Activated CD8-positive, alpha-beta T cell treated with anti-CD3 and anti-CD28 coated beads for 36 hours (primary cell): ENCODE measurements at regions of chr20 and their contacts with region 1.

Region 1: GRCh38 chr20:45934586-45935415 is at the start of gene PCIF1:
- DNase-seq: peak; percentile 99
- ATAC-seq: peak; percentile 84
- H3K4me3 Mint-ChIP-seq: peak within 1 kb of the TSS; percentile 95
- H3K27ac Mint-ChIP-seq: peak within 1 kb of the TSS; percentile 96
- H3K4me1 Mint-ChIP-seq: peaks cover 25% of the 10 kb centered on the region
- H3K27me3 Mint-ChIP-seq: no peaks in the 10 kb centered on the region
- CTCF ChIP-seq: no peak
- total RNA-seq, gene PCIF1: 27.8 to 29.5 TPM

Region 2: GRCh38 chr20:45812157-45813020 is 122.4 kb before region 1 on chr20 and contains the start of gene UBE2C:
- CTCF ChIA-PET with region 1: no interaction called
- POLR2A ChIA-PET with region 1: interaction called, 11 read pairs
- intact Hi-C with region 1: no loop called
- DNase-seq: peak; percentile 98
- ATAC-seq: peak; percentile 100
- H3K4me3 Mint-ChIP-seq: peak within 1 kb of the TSS; percentile 98
- H3K27ac Mint-ChIP-seq: peak within 1 kb of the TSS; percentile 83
- H3K4me1 Mint-ChIP-seq: peaks cover 16% of the 10 kb centered on the region
- H3K27me3 Mint-ChIP-seq: no peaks in the 10 kb centered on the region
- CTCF ChIP-seq: no peak
- total RNA-seq, gene UBE2C: 149 to 151 TPM

Region 3: GRCh38 chr20:45880988-45881788 is 53.6 kb before region 1 on chr20 and contains the start of gene ZSWIM1:
- CTCF ChIA-PET with region 1: interaction called, 5 read pairs
- POLR2A ChIA-PET with region 1: interaction called, 14 read pairs
- intact Hi-C with region 1: loop called (anchors 2 kb)
- DNase-seq: peak; percentile 100
- ATAC-seq: peak; percentile 99
- H3K4me3 Mint-ChIP-seq: peak within 1 kb of the TSS; percentile 94
- H3K27ac Mint-ChIP-seq: peak within 1 kb of the TSS; percentile 93
- H3K4me1 Mint-ChIP-seq: peaks cover 43% of the 10 kb centered on the region
- H3K27me3 Mint-ChIP-seq: no peaks in the 10 kb centered on the region
- CTCF ChIP-seq: no peak
- total RNA-seq, gene ZSWIM1: 8.2 to 9.1 TPM

Region 4: GRCh38 chr20:45899041-45899835 is 35.6 kb before region 1 on chr20:
- CTCF ChIA-PET with region 1: no interaction called
- POLR2A ChIA-PET with region 1: interaction called, 59 read pairs
- intact Hi-C with region 1: no loop called
- DNase-seq: no peak
- ATAC-seq: no peak
- H3K4me3 Mint-ChIP-seq: no peak overlapping the region
- H3K27ac Mint-ChIP-seq: no peak overlapping the region
- H3K4me1 Mint-ChIP-seq: peaks cover under 1% of the 10 kb centered on the region
- H3K27me3 Mint-ChIP-seq: no peaks in the 10 kb centered on the region
- CTCF ChIP-seq: no peak

Region 5: DNA sequence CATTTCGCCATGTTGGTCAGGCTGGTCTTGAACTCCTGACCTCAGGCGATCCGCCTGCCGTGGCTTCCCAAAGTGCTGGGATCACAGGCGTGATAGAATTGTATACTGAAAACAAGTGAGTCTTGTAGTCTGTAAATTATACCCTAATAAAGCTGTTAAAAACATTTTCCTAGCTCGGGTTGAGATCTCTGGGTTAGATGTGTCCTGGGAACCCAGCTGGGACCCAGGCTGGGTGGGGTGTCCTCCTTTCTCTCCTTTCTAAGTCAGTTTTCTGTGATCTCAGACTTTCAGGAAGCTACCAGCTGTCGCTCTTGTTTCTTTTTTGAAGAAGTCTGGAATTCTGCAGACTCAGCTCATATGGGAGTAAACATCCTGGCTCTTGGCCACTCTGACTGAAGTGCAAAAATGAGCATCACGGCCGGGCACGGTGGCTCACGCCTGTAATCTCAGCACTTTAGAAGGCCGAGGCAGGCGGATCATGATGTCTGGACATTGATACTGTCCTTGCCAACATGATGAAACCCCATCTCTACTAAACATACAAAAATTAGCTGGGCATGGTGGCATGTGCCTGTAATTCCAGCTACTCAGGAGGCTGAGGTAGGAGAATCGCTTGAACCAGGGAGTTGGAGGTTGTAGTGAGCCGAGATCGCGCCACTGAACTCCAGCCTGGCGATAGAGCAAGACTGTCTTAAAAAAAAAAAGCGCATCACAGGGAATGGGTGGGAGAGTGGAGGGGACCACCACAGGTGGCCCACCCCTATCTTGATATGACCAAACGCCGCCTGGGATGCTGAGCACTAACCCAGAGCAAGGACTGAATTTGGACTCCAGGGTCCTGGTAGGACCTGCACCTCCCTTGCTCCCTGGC is 10.2 kb before region 1 on chr20:
- CTCF ChIA-PET with region 1: interaction called, 7 read pairs
- POLR2A ChIA-PET with region 1: interaction called, 17 read pairs
- intact Hi-C with region 1: no loop called
- DNase-seq: no peak
- ATAC-seq: no peak
- H3K4me3 Mint-ChIP-seq: no peak overlapping the region
- H3K27ac Mint-ChIP-seq: no peak overlapping the region
- H3K4me1 Mint-ChIP-seq: peaks cover 3% of the 10 kb centered on the region
- H3K27me3 Mint-ChIP-seq: peaks cover 2% of the 10 kb centered on the region
- CTCF ChIP-seq: no peak

Region 6: DNA sequence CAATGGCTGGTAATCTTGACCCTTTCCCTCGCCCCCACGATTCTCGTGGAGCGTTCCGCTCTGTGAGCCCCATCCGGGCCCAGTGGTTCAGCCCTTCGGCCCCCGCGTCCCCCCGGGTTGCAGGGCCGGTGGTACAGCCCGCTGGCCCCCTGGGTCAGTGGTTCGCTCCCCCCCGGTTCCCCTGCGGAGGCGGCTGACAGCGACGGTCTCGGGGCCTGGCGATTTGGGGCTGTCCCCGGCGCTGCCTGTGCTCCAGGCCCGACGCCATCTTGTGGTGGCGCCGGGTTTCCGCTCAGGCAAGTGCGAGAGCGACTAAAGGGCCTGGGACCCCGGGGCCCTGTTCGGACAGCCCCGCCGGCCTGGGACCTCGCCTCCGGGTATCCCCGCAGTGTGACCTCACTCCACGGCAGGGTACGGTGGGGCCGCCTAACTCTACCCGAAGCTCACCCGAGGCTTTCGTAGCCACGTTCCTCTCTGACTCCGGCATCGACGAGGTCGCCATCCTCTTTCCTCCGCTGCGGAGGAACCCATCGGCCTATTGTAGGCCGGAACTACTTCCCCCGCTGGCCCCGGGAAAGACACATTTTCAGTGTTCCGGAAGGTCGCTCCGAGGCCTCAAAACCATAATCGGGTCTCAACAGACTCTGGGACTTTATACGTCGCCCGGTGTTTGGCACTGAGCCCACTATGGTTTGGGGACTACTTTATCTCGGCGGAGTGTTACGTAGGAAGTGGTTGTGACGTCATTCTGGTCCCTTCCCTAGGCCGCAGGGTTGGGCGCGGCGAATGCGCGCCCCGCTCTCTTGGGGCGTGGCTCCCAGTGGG is 37.1 kb after region 1 on chr20 and contains the start of gene ZNF335:
- CTCF ChIA-PET with region 1: interaction called, 74 read pairs
- POLR2A ChIA-PET with region 1: interaction called, 60 read pairs
- intact Hi-C with region 1: no loop called
- DNase-seq: peak; percentile 95
- ATAC-seq: peak; percentile 86
- H3K4me3 Mint-ChIP-seq: peak within 1 kb of the TSS; percentile 84
- H3K27ac Mint-ChIP-seq: peak within 1 kb of the TSS; percentile 100
- H3K4me1 Mint-ChIP-seq: peaks cover 16% of the 10 kb centered on the region
- H3K27me3 Mint-ChIP-seq: no peaks in the 10 kb centered on the region
- CTCF ChIP-seq: no peak
- total RNA-seq, gene ZNF335: 27.0 to 28.8 TPM